K562 (cell line): ENCODE measurements at regions of chr1 and their contacts with region 1.

Region 1: DNA sequence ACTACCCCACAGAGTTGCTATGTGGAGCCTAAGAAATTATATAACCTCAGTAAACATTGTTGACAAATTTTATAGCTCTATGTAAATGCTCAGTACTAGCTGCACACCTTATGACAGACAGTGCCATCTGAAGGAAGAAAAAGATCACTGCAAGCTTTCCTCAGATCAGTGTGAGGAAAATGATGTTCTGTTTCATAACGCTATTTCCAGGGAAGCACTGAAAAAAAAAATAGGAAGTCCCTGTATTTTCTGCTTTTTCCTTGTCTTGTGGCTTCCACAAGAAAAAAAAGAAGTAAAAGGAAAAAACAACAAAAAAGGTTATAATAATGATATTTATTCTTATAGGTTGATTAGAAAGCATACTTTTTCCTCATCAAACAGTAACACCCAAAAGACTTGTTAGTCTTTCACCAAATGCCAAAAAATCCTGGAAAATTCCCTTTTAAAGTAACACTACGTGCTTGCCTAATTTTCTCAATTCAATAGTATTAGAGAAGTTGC is 23.2 kb downstream of the LYST start:
- DNase-seq: peak in 3 of 4 experiments; percentile 16 to 28 (median 17)
- ATAC-seq: peak; percentile 92
- H3K4me3 ChIP-seq: no peak overlapping the region
- H3K27ac ChIP-seq: no peak overlapping the region
- H3K4me1 ChIP-seq: no peaks in the 10 kb centered on the region
- H3K27me3 ChIP-seq: peaks cover 0 to 3% of the 10 kb centered on the region in 2 experiments; a peak in 1 of 5 replicates
- CTCF ChIP-seq: peak; percentile 29 to 65 (median 59); a peak in 5 of 6 replicates
- EP300 ChIP-seq: no peak
- POLR2A ChIP-seq: no peak
- RAD21 ChIP-seq: peak; percentile 59

Region 2: GRCh38 chr1:235866913-235867845 is 23.7 kb after region 1 on chr1:
- CTCF ChIA-PET with region 1: no interaction called
- POLR2A ChIA-PET with region 1: no interaction called
- in situ Hi-C with region 1: no loop called
- intact Hi-C with region 1: loop called (anchors 1 kb)
- DNase-seq: peak; percentile 98 to 100 (median 99)
- ATAC-seq: peak; percentile 96
- H3K4me3 ChIP-seq: peak overlapping the region; percentile 80
- H3K27ac ChIP-seq: peak overlapping the region; percentile 55; the same call in 2 of the 3 replicates
- H3K4me1 ChIP-seq: peaks cover 9 to 13% of the 10 kb centered on the region in 2 experiments; a peak in 4 of 5 replicates
- H3K27me3 ChIP-seq: peaks cover 14 to 20% of the 10 kb centered on the region in 2 experiments
- CTCF ChIP-seq: no peak
- EP300 ChIP-seq: no peak
- POLR2A ChIP-seq: peak; percentile 95
- RAD21 ChIP-seq: 0 out of 4 replicates have a peak, but pooled peaks of 1 of the 2 experiments have one; percentile 8